ENCODE measurements at regions of chr3 and their contacts with region 1.

Region 1: DNA sequence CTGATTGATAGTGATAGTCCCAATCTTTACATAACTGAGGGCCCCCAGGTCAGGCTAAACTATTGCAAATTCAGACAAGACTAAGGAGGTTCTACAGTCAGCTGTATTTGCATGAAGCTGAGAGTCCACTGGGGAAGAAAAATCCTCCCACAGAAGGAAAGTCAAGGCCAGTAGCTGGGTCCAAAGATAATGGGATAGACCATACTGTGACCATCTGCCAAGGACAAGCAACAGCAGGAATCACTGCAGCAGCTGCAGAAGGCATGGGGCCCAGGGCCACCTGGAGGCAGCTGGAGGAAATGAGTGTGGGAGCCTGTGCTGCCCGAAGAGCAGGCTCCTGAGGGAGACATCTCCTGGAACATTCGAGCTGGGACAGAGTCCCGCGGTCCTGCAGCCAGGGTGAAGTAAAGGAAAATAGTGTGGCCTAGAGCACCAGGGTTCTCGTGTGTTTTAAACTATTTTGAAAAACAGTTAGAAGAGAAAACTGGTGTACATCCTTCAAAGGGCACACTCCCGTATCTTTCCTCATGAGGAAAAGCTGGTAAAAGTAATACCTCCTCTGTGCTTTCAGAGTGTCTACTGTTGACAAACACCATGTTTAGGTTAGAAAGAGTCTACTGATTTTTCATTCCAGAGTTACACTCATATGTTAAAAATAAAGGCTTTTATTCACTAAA is 13.2 kb upstream of the TMEM212 start:
- DNase-seq: peak; percentile 39
- ATAC-seq: no peak
- H3K4me3 Mint-ChIP-seq: no peak overlapping the region
- H3K27ac Mint-ChIP-seq: no peak overlapping the region
- H3K4me1 Mint-ChIP-seq: peaks cover 5% of the 10 kb centered on the region
- H3K27me3 Mint-ChIP-seq: peaks cover 8% of the 10 kb centered on the region

Region 2: DNA sequence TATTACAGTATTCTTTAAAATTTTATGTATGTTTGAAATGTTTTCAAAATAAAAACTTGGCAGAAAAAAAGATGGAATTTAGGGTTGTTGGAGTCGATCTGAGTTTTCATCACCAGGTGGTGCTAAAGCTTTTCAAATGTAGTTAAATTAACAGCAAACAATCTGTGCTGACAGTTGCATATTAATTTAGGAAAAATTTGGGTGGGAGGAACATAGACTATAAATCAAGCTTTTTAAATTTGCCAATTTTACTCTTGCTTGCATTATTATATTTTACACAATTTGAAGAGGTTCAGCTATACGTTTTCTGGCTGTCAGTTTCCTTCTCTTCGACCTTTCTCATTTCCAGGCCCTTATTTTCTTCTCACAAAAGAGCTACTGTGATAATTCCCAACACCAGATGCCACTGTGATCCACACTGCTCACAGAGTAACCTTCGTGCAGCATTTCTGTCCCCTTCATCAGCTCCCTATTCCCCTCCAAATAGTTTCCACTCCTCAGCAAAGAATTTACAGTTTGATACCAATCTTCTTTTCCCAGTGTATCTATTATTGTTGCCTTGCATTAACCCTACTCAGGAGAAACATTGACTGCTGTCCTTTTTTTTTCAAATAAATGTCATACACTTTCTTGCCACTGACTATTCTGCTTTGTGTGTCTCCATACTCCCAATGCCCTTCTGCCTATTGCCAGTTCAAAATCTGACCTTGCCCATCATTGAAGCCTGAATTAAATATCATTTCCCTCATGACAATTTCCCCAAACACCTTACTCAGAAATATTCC is 868.2 kb before region 1 on chr3:
- CTCF ChIA-PET with region 1: no interaction called
- POLR2A ChIA-PET with region 1: no interaction called
- intact Hi-C with region 1: loop called in 1 of 2 experiments (anchors 2 kb)
- DNase-seq: peak; percentile 7
- ATAC-seq: no peak
- H3K4me3 Mint-ChIP-seq: no peak overlapping the region
- H3K27ac Mint-ChIP-seq: no peak overlapping the region
- H3K4me1 Mint-ChIP-seq: no peaks in the 10 kb centered on the region
- H3K27me3 Mint-ChIP-seq: peaks cover 2% of the 10 kb centered on the region

Region 3: DNA sequence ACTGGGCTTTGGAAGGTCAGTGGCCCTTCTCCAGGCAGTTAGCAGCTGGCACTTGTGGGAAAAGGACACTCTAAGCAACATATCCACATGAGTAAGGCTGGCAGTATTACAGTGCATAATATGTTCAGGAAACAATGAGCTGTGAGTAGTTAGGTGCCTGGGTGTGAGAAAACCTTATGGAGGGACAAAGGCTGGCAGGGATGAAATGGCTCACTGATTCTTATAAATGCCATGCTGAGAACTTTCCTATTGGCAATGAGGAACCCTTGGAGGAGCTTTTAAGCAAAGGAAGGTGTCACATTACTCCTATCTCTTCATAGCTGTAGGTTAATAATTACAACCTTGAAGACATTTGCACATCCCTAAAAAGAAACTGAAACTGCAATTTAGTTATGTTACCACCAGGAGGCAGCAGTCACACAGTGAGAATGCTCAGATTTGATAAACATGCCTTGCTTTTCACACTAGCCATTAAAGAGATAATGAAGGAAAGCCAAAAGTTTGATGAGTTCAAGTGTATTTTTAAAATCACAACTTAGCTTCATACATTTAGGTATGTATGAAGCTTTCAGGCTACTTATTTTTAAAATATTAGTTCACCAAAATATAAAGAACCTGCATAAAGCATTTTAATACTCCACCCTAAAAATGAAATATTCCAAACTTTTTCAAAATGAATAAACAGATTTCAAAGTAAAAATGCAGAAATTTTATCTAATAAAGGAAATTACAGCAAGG is 666.8 kb before region 1 on chr3:
- CTCF ChIA-PET with region 1: no interaction called
- POLR2A ChIA-PET with region 1: no interaction called
- intact Hi-C with region 1: loop called in 1 of 2 experiments (anchors 10 kb)
- DNase-seq: peak; percentile 25
- ATAC-seq: no peak
- H3K4me3 Mint-ChIP-seq: no peak overlapping the region
- H3K27ac Mint-ChIP-seq: no peak overlapping the region
- H3K4me1 Mint-ChIP-seq: peaks cover 28% of the 10 kb centered on the region
- H3K27me3 Mint-ChIP-seq: no peaks in the 10 kb centered on the region

Region 4: GRCh38 chr3:171646357-171647133 is 183.4 kb before region 1 on chr3:
- CTCF ChIA-PET with region 1: interaction called, 4 read pairs
- POLR2A ChIA-PET with region 1: no interaction called
- intact Hi-C with region 1: loop called (anchors 2 to 5 kb)
- DNase-seq: no peak
- ATAC-seq: no peak
- H3K4me3 Mint-ChIP-seq: no peak overlapping the region
- H3K27ac Mint-ChIP-seq: no peak overlapping the region
- H3K4me1 Mint-ChIP-seq: no peaks in the 10 kb centered on the region
- H3K27me3 Mint-ChIP-seq: no peaks in the 10 kb centered on the region

Region 5: DNA sequence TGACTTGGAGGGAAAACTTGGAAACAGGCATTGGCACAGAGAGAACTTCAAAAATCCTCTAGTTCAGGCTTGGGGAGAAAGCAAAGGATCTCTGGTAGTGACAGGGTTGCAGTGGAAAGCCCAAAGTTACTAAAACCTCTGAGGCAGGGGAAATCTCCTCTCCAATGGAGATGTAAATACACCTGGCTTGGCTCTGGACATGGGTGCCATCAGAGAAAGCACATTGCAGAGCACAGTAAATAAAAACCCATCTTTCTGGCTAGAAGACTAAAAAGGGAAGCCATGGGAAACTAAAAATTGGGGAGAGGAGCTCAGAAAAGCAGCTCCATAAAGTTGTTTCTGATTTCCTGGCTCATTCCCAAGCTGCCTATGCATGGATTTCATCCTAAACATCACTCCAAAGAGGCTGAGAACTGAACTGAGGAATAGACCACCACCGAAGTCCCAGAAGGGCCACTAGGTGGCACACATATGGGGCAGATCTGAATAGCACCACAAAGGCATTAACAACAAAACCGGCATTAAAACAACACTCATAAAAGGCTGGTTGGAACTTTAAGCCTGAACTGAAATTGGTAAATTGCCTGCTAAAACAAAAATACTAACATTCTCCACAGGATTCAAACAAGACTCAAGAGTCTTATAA is 126.1 kb before region 1 on chr3:
- CTCF ChIA-PET with region 1: no interaction called
- POLR2A ChIA-PET with region 1: no interaction called
- intact Hi-C with region 1: loop called in 1 of 2 experiments (anchors 5 kb)
- DNase-seq: peak; percentile 39
- ATAC-seq: no peak
- H3K4me3 Mint-ChIP-seq: no peak overlapping the region
- H3K27ac Mint-ChIP-seq: no peak overlapping the region
- H3K4me1 Mint-ChIP-seq: no peaks in the 10 kb centered on the region
- H3K27me3 Mint-ChIP-seq: peaks cover 8% of the 10 kb centered on the region